ENCODE measurements at regions of chr6 and their contacts with region 1.

Region 1: DNA sequence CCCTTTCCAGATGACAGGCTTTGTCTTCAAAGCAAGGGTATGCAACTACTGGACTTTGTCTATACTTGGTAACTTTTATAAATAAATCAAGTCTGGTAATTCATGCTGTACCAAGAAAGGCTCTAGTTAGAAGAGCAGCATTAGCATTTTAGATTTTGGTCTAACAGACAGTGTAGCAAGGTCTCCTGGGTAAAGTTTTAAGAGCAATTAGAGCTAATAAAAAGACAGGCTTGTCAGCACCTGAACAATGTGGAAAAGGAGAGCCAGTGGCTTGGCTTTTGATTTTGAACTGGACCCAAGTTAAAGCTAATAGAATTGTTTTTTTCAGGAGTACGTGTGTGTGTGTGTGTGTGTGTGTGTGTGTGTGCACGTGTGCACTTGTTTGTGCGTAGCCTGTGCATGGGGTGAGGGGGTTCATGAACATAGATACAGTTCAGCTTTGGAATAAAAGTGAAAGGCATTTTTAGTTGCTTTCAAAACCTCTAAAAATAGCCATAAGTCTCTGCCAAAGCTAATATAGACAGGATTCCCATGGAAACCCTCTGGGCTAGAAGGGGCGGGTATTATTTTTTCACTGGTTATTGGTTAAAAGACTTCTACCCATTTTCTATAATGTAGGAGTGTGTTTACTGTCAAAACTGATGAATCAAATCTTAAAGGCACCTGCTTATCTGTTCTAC is 138.4 kb downstream of the KCNQ5 start:
- DNase-seq: no peak
- ATAC-seq: no peak
- H3K4me3 ChIP-seq: no peak overlapping the region
- H3K27ac ChIP-seq: no peak overlapping the region
- H3K4me1 ChIP-seq: peaks cover 65% of the 10 kb centered on the region
- H3K27me3 ChIP-seq: no peaks in the 10 kb centered on the region
- CTCF ChIP-seq: no peak

Region 2: DNA sequence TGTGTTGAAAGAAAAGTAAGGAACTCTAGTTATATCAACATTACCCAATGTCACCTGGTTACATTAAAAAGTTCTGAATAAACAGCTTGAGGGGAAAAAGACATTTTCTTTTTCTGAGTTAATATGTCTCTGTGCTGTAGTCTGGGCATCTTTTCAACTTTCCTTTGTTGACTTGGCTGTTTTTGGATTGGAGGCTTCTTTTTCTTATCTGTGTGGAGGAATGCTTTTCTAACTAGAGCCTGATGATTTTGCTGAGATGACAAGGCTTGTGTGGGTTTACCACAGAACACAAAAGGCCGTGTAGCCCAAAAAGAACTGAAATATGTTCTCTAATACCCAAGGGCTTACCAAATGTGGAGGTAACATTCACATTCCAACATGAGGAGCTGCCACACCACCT is 23.4 kb after region 1 on chr6:
- intact Hi-C with region 1: loop called in 1 of 2 experiments (anchors 1 kb)
- DNase-seq: no peak
- ATAC-seq: no peak
- H3K4me3 ChIP-seq: no peak overlapping the region
- H3K27ac ChIP-seq: peak overlapping the region; percentile 46
- H3K4me1 ChIP-seq: peaks cover 26% of the 10 kb centered on the region
- H3K27me3 ChIP-seq: no peaks in the 10 kb centered on the region
- CTCF ChIP-seq: no peak

Region 3: GRCh38 chr6:72950114-72950860 is 190.0 kb after region 1 on chr6:
- intact Hi-C with region 1: loop called in 1 of 2 experiments (anchors 10 kb)
- DNase-seq: peak in 1 of 2 donors; percentile 50
- ATAC-seq: peak; percentile 83 to 89 (median 86)
- H3K4me3 ChIP-seq: peak overlapping the region; percentile 19
- H3K27ac ChIP-seq: peak overlapping the region; percentile 92
- H3K4me1 ChIP-seq: peaks cover 77% of the 10 kb centered on the region
- H3K27me3 ChIP-seq: no peaks in the 10 kb centered on the region
- CTCF ChIP-seq: no peak

Measured in psoas muscle (tissue), 8 donors.